Breast epithelium (tissue), 4 donors: ENCODE measurements at regions of chr17 and their contacts with region 1.

Region 1: GRCh38 chr17:10059369-10060211 is 138.8 kb downstream of the GAS7 start:
- DNase-seq: no peak
- H3K4me3 ChIP-seq: no peak overlapping the region
- H3K27ac ChIP-seq: peak overlapping the region; percentile 72 to 94
- H3K4me1 ChIP-seq: peaks cover 0 to 3% of the 10 kb centered on the region in 2 donors
- H3K27me3 ChIP-seq: no peaks in the 10 kb centered on the region
- CTCF ChIP-seq: no peak
- POLR2A ChIP-seq: no peak

Region 2: DNA sequence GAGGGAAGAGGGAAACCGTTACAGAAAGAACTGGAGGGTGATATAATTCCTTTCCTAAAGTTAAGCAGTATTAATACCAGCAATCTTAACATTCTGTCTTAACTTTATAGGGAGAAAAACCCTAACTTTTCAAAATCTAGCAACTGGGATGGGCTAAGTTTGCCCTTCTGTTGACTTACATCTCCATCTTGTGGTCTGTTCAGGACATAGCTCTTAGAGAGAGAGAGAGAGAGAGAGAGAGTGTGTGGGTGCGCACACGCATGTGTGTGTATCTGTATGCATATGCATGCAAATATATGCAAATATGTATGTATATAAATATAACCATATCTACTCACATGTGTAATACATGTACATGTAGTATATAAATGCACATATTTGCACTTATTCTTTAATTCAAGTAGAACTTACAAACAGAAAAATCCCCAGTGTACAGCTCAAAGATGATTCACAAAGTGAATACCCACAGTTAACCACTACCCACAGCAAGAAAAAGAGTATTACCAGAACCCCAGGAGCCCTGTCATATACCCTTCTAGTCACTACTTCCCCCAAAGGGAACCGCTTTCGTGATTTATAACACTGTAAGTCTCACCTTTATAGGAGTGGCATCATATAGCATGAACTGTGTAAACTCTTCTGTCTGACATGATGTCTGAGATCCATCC is 530.4 kb before region 1 on chr17:
- intact Hi-C with region 1: no loop called
- DNase-seq: no peak
- H3K4me3 ChIP-seq: no peak overlapping the region
- H3K27ac ChIP-seq: no peak overlapping the region
- H3K4me1 ChIP-seq: no peaks in the 10 kb centered on the region
- H3K27me3 ChIP-seq: no peaks in the 10 kb centered on the region
- CTCF ChIP-seq: peak in 1 of 3 donors; percentile 51
- POLR2A ChIP-seq: no peak

Region 3: GRCh38 chr17:9729034-9729650 is 330.4 kb before region 1 on chr17:
- intact Hi-C with region 1: no loop called
- DNase-seq: peak in 1 of 2 donors; percentile 18
- H3K4me3 ChIP-seq: no peak overlapping the region
- H3K27ac ChIP-seq: no peak overlapping the region
- H3K4me1 ChIP-seq: no peaks in the 10 kb centered on the region
- H3K27me3 ChIP-seq: no peaks in the 10 kb centered on the region
- CTCF ChIP-seq: peak; percentile 94 to 98 (median 96)
- POLR2A ChIP-seq: no peak

Region 4: DNA sequence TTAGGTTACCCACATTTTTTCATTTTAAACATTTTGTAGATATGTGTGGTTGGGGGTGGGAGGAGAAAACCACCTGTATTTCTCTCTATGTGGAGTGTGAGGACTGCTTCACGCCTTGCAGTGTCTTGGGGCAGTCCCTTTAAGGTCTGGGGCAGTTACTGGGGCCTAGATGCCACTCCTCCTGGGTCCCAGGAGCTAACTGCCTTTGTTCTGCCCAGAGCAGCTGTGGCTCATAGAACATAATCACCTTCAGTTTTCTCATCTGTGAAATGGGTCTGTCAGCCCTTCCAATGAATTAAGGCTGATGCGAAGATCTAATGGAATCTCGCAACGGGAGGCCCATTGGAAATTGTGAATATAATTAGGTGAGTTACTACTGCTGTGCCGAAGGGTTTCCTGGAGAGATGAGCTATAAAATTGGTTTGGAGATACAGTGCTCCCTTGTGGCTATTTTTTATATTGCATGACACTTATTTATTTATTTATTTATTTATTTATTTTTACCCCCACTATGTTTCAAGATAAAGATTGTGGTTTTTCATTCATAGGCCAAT is 291.1 kb before region 1 on chr17:
- intact Hi-C with region 1: loop called (anchors 10 kb)
- DNase-seq: no peak
- H3K4me3 ChIP-seq: no peak overlapping the region
- H3K27ac ChIP-seq: no peak overlapping the region
- H3K4me1 ChIP-seq: no peaks in the 10 kb centered on the region
- H3K27me3 ChIP-seq: no peaks in the 10 kb centered on the region
- CTCF ChIP-seq: peak in 2 of 3 donors; percentile 31 to 46
- POLR2A ChIP-seq: no peak